ENCODE measurements at regions of chr12 and their contacts with region 1.

Region 1: GRCh38 chr12:56657416-56658379 is 11.9 kb upstream of the ATP5F1B start:
- DNase-seq: no peak
- H3K4me3 Mint-ChIP-seq: no peak overlapping the region
- H3K27ac Mint-ChIP-seq: peak overlapping the region; percentile 73
- H3K4me1 Mint-ChIP-seq: peaks cover 18% of the 10 kb centered on the region
- H3K27me3 Mint-ChIP-seq: no peaks in the 10 kb centered on the region

Region 2: DNA sequence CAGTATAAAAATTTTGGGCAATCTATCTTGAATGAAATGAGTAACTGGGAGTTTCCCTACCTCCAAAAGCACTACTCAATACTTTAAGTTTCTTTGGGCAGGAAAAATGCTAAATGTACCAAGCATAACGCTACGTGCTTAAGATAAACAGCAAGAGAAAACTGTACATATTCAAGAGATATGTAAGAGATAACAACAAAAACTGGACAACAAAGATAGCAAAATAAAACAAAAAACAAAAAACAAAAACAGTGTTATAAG is 10.4 kb after region 1 on chr12:
- CTCF ChIA-PET with region 1: interaction called, 3 read pairs
- intact Hi-C with region 1: loop called (anchors 1 kb)
- DNase-seq: no peak
- H3K4me3 Mint-ChIP-seq: no peak overlapping the region
- H3K27ac Mint-ChIP-seq: peak overlapping the region; percentile 71
- H3K4me1 Mint-ChIP-seq: peaks cover 49% of the 10 kb centered on the region
- H3K27me3 Mint-ChIP-seq: no peaks in the 10 kb centered on the region

Region 3: GRCh38 chr12:56677680-56678079 is 20.0 kb after region 1 on chr12:
- CTCF ChIA-PET with region 1: no interaction called
- intact Hi-C with region 1: loop called (anchors 2 kb)
- DNase-seq: peak; percentile 51
- H3K4me3 Mint-ChIP-seq: no peak overlapping the region
- H3K27ac Mint-ChIP-seq: peak overlapping the region; percentile 75
- H3K4me1 Mint-ChIP-seq: peaks cover 78% of the 10 kb centered on the region
- H3K27me3 Mint-ChIP-seq: no peaks in the 10 kb centered on the region